Activated CD4-positive, alpha-beta memory T cell treated with anti-CD3 and anti-CD28 coated beads for 36 hours (primary cell): ENCODE measurements at regions of chr7 and their contacts with region 1.

Region 1: DNA sequence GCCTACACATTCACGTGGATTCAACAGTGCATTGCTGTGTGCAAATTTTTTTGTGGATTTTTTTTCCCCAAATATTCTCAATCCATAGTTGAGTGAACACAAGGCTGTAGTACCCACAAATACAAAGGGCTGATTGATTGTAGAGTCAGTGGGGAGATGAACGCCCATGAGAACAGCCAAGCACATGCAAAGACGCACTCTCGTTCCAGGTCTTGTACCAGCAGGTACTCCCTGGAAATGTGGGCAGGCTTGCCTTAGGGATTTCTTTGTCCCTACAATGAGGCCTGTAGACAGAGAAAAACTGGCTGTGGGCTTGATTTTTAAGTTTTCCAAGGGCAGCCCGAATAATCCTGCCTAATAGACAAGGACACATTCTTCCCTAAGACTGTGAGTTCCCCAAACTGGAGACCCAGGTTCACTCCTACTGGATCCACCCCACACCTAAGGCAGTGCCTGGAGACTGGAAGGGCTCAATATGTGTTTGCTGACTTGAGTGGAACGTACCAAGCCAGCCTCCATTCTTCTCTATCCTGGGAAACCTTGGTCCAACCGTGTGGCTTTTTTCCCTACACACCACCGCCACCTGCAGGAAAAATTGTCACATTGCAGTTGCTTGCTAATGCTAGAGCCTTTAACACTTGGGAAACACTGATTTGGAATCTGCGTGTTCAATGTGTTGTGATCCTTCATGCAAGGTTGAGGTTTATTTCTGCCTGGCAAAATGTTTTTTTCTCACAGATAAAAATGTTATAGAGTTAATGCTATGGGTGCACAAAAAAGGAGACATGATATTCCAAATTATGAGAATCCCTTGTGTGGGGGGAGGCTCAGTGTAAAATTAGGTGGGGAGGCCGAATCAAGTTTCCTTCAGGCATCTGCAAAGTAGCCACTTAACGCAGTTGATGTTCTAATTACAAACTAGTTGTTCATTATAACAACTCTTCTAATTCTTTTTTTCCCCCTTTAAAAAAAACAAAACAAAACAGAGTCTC is 49.3 kb downstream of the PPP1R17 start:
- DNase-seq: peak; percentile 31
- H3K4me3 Mint-ChIP-seq: no peak overlapping the region
- H3K27ac Mint-ChIP-seq: no peak overlapping the region
- H3K4me1 Mint-ChIP-seq: no peaks in the 10 kb centered on the region
- H3K27me3 Mint-ChIP-seq: no peaks in the 10 kb centered on the region

Region 2: GRCh38 chr7:31373337-31374289 is 362.7 kb before region 1 on chr7:
- CTCF ChIA-PET with region 1: no interaction called
- POLR2A ChIA-PET with region 1: no interaction called
- intact Hi-C with region 1: loop called (anchors 10 kb)
- DNase-seq: peak; percentile 9
- H3K4me3 Mint-ChIP-seq: no peak overlapping the region
- H3K27ac Mint-ChIP-seq: no peak overlapping the region
- H3K4me1 Mint-ChIP-seq: no peaks in the 10 kb centered on the region
- H3K27me3 Mint-ChIP-seq: no peaks in the 10 kb centered on the region

Region 3: GRCh38 chr7:31710171-31710570 is 26.1 kb before region 1 on chr7:
- CTCF ChIA-PET with region 1: no interaction called
- POLR2A ChIA-PET with region 1: no interaction called
- intact Hi-C with region 1: no loop called
- DNase-seq: no peak
- H3K4me3 Mint-ChIP-seq: no peak overlapping the region
- H3K27ac Mint-ChIP-seq: no peak overlapping the region
- H3K4me1 Mint-ChIP-seq: no peaks in the 10 kb centered on the region
- H3K27me3 Mint-ChIP-seq: no peaks in the 10 kb centered on the region